ENCODE measurements at regions of chr5 and their contacts with region 1.

Region 1: GRCh38 chr5:178551059-178551458 is 39.1 kb downstream of the COL23A1 start:
- DNase-seq: peak in 2 of 5 donors; percentile 3 to 6
- H3K4me3 ChIP-seq: no peak overlapping the region
- H3K4me3 Mint-ChIP-seq: no peak overlapping the region
- H3K27ac ChIP-seq: no peak overlapping the region
- H3K27ac Mint-ChIP-seq: no peak overlapping the region
- H3K4me1 ChIP-seq: no peaks in the 10 kb centered on the region
- H3K4me1 Mint-ChIP-seq: no peaks in the 10 kb centered on the region
- H3K27me3 ChIP-seq: no peaks in the 10 kb centered on the region
- H3K27me3 Mint-ChIP-seq: peaks cover 6 to 8% of the 10 kb centered on the region in 2 donors

Region 2: GRCh38 chr5:178232124-178232919 is 318.7 kb before region 1 on chr5 and contains the start of gene PHYKPL:
- CTCF ChIA-PET with region 1: interaction called, 11 read pairs
- POLR2A ChIA-PET with region 1: no interaction called
- intact Hi-C with region 1: no loop called
- DNase-seq: peak; percentile 61 to 71 (median 65)
- H3K4me3 ChIP-seq: peak within 1 kb of the TSS; percentile 62 to 74
- H3K4me3 Mint-ChIP-seq: peak within 1 kb of the TSS; percentile 82 to 90 (median 86)
- H3K27ac ChIP-seq: peak within 1 kb of the TSS; percentile 82
- H3K27ac Mint-ChIP-seq: peak within 1 kb of the TSS; percentile 87 to 95 (median 91)
- H3K4me1 ChIP-seq: peaks cover 49% of the 10 kb centered on the region
- H3K4me1 Mint-ChIP-seq: peaks cover 25 to 74% (median 56%) of the 10 kb centered on the region in 4 donors
- H3K27me3 ChIP-seq: no peaks in the 10 kb centered on the region
- H3K27me3 Mint-ChIP-seq: no peaks in the 10 kb centered on the region
- total RNA-seq, gene PHYKPL: 234 to 251 TPM

Region 3: DNA sequence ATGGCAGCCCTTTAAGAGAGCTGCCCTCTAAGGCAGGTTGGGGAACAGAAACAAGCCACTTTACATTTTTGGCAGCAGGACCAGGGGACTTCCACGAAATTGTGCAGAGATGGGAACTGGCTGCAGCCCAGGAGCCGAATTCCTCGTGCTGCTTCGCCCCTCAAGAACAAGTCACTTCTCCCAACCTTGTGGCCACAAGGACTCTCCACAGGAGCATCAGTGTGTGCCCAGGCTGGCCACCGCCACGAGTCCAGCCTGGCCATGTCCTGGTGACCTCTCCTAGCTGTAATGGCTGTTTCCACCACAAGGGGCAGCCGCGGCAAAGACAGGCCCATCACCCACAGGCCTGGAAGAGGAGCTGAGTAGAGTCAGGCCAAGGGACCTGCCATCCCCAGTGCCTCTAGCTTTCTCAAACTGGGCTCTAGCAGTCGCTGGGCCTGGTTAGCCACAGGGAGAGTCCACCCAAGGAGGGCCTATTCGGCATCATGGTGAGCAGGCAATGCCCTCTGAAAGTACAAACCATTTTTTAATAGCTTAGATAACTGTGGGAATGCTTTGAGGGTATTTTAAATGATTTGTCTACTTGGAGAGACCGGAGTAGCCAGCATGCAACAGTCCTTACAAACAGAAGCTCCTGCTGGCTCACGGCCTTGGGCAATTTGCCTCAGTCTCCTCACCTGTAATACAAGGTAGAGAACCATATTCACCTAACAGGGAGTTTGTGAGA is 89.9 kb before region 1 on chr5:
- CTCF ChIA-PET with region 1: interaction called, 7 read pairs
- POLR2A ChIA-PET with region 1: no interaction called
- intact Hi-C with region 1: loop called (anchors 5 kb)
- DNase-seq: peak in 3 of 5 donors; percentile 7 to 12 (median 7)
- H3K4me3 ChIP-seq: no peak overlapping the region
- H3K4me3 Mint-ChIP-seq: no peak overlapping the region
- H3K27ac ChIP-seq: no peak overlapping the region
- H3K27ac Mint-ChIP-seq: no peak overlapping the region
- H3K4me1 ChIP-seq: no peaks in the 10 kb centered on the region
- H3K4me1 Mint-ChIP-seq: no peaks in the 10 kb centered on the region
- H3K27me3 ChIP-seq: no peaks in the 10 kb centered on the region
- H3K27me3 Mint-ChIP-seq: peaks cover 4% of the 10 kb centered on the region in 2 donors